ENCODE measurements at regions of chr17 and their contacts with region 1.

Region 1: DNA sequence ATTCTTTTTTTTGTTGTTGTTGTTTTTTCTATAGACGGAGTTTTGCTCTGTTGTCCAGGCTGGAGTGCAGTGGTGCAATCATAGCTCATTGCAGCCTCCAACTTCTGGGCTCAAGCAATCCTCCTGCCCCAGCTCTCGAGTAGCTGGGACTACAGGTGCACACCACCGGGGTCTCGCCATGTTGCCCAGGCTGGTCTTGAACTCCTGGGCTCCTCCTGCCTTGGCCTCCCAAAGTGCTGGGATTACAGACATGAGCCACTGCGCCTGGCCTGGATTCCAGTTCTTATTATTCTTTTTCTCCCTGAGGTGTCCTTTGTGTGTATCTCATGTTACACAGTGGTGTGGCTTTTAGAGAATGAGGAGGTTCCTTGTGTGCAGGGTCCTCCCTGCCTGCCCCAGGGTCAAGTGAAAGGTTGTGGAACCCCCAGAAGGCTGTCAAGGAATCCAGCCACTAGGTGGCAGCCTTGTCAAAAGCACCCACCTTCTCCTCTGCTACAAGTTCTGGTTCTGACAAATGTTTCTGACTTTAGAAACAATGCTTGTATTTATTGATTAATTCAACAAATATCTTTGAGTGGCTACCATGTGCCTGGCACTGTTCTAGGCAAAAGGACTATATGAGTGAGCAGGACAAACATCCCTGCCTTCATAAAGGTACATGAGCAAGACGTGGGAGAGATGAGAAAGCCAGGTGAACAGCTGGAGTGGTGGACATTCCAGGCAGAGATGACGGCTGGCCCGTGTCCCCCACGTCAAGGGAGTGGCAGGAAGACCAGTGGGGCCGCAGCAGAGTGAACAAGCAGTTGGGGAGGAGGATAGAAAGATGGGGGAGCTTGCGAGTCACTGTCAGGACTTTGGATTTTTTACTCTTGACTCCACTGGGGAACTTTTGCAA is 112.4 kb downstream of the SPECC1 start:
- DNase-seq: peak; percentile 89
- H3K4me3 Mint-ChIP-seq: no peak overlapping the region
- H3K27ac Mint-ChIP-seq: no peak overlapping the region
- H3K4me1 Mint-ChIP-seq: peaks cover 2% of the 10 kb centered on the region
- H3K27me3 Mint-ChIP-seq: peaks cover 9% of the 10 kb centered on the region

Region 2: GRCh38 chr17:19992803-19993713 is 128.5 kb before region 1 on chr17:
- intact Hi-C with region 1: loop called (anchors 1 kb)
- DNase-seq: peak; percentile 90
- H3K4me3 Mint-ChIP-seq: no peak overlapping the region
- H3K27ac Mint-ChIP-seq: no peak overlapping the region
- H3K4me1 Mint-ChIP-seq: peaks cover 5% of the 10 kb centered on the region
- H3K27me3 Mint-ChIP-seq: peaks cover 14% of the 10 kb centered on the region

Region 3: DNA sequence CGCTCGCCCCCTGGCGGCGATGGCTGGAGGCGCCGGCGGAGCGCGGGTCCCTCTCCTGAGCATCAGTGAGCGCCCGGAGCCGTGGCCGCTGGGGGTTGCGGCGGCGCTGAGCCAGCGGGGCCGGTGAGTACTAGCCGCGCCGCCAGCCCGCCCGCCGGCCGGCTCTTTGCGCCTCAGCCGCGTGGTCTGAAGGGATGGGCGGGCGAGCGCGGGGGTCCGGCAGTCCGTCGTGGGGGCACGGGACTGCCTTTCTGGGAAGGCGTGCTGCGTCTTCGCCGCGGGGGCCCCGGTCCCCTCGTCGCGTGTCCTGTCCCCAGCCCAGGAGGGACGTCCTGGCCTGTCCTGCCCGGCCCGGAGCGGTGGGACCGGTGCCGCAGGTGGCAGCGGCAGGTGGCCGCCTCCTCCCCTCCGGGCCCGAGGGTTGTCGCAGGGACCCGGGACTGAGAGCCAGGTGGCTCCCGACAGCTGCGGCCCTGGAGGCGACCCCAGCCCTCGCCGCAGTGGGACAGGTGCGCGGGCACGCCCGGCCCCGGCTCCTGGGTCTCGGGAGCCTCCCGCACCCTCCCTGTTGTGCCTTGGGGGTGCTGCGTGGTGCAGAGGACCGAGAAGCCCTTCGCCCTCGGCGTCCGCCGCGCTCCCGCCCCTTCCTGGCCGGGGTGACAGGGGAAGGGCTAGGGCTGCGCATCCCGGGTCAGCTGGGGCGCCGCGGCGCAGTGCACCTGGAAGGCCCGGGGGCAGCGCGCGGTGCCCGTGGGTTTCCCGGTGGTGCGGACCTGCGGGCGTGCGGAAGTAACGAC is 112.1 kb before region 1 on chr17 and contains the start of gene SPECC1:
- intact Hi-C with region 1: loop called (anchors 5 kb)
- DNase-seq: peak; percentile 97
- H3K4me3 Mint-ChIP-seq: peak within 1 kb of the TSS; percentile 91
- H3K27ac Mint-ChIP-seq: peak within 1 kb of the TSS; percentile 76
- H3K4me1 Mint-ChIP-seq: peaks cover 9% of the 10 kb centered on the region
- H3K27me3 Mint-ChIP-seq: peaks cover 62% of the 10 kb centered on the region
- total RNA-seq, gene SPECC1: 6.0 and 6.4 TPM in 2 replicates

Region 4: DNA sequence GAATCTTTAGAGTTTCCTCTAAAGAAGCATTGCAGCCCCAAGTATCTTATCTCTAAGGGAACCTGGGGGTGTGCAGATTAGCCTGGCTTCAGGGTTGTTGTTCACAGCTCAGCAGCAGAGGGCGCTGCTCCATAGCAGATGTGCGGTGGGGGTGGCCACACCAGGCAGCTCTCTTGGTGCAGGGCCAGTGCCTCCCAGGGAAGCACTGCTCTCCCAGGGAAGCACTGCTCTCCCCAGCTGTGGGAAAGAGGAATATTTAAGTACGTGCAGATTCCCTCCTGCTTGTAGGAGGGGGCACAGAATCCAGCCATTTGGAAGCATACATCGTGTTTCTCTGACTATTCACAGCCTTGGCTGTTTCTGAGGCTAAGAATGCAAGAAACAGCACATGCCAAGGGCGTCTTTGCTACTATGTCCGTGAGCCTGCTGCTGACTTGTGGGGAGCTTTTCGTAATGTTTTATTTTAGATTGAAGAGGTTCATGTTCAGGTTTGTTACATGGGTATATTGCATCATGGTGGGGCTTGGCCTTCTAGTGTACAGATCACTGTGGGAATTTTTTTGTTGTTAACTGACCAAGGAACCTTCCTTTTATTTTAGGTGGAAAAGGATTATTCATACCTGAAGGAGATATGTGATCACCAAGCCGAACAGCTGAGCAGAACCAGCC is 105.3 kb after region 1 on chr17:
- intact Hi-C with region 1: loop called (anchors 2 kb)
- DNase-seq: peak; percentile 95
- H3K4me3 Mint-ChIP-seq: no peak overlapping the region
- H3K27ac Mint-ChIP-seq: no peak overlapping the region
- H3K4me1 Mint-ChIP-seq: peaks cover 17% of the 10 kb centered on the region
- H3K27me3 Mint-ChIP-seq: peaks cover 4% of the 10 kb centered on the region